Tibial artery (tissue), 4 donors: ENCODE measurements at regions of chr5 and their contacts with region 1.

Region 1: GRCh38 chr5:106277540-106278096 is 1393.1 kb downstream of the EFNA5 start:
- DNase-seq: no peak
- H3K4me3 ChIP-seq: no peak overlapping the region
- H3K27ac ChIP-seq: no peak overlapping the region
- H3K4me1 ChIP-seq: no peaks in the 10 kb centered on the region
- H3K27me3 ChIP-seq: no peaks in the 10 kb centered on the region
- CTCF ChIP-seq: no peak

Region 2: GRCh38 chr5:104533509-104533908 is 1744.1 kb before region 1 on chr5:
- intact Hi-C with region 1: loop called (anchors 5 kb)
- DNase-seq: no peak
- H3K4me3 ChIP-seq: no peak overlapping the region
- H3K27ac ChIP-seq: no peak overlapping the region
- H3K4me1 ChIP-seq: no peaks in the 10 kb centered on the region
- H3K27me3 ChIP-seq: no peaks in the 10 kb centered on the region
- CTCF ChIP-seq: no peak